T-cell (primary cell): ENCODE measurements at regions of chr12 and their contacts with region 1.

Region 1: DNA sequence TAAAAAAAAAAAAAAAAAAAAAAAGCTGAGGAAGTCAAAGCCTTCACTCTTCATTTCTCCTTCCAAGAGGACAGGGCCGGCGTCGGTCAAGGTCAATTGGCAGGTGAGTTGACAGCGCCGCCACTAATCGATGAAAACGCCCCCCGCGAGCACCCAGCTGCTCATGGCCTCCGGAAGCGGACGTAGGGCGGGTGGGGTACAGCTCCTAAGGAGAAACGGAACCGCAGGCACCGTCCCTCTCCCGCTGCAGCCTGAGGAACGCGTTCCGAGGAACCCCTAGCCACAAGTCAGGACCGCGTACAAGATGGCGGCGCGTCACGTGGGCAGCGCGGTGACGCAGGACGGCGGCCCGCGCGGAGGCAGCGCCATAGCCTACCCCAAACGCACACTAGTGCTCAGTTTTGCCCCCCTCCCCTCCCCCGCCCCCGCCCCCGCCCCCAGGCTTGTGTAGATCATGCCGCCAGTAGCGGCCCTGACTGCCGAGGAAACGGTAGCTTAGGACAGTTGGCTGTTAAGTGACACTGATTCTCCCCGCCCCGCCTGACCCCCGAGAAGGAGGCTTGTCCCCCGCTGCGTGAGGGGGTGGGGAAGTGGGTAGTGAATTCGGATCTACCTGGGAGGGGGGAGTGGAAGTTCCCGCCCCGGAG is at the start of gene ATF1:
- DNase-seq: peak; percentile 79 to 95 (median 88)
- ATAC-seq: peak; percentile 83 to 84 (median 84)
- H3K4me3 ChIP-seq: peak within 1 kb of the TSS; percentile 66 to 97
- H3K4me3 Mint-ChIP-seq: peak within 1 kb of the TSS; percentile 92 to 96 (median 93)
- H3K27ac ChIP-seq: peak within 1 kb of the TSS; percentile 92
- H3K27ac Mint-ChIP-seq: peak within 1 kb of the TSS; percentile 94
- H3K4me1 ChIP-seq: peaks cover 5 to 33% of the 10 kb centered on the region in 2 experiments
- H3K4me1 Mint-ChIP-seq: peaks cover 28 to 43% (median 42%) of the 10 kb centered on the region in 3 donors
- H3K27me3 ChIP-seq: no peaks in the 10 kb centered on the region
- H3K27me3 Mint-ChIP-seq: no peaks in the 10 kb centered on the region
- total RNA-seq, gene ATF1: 33.2 to 42.8 (median 35.5) TPM

Region 2: DNA sequence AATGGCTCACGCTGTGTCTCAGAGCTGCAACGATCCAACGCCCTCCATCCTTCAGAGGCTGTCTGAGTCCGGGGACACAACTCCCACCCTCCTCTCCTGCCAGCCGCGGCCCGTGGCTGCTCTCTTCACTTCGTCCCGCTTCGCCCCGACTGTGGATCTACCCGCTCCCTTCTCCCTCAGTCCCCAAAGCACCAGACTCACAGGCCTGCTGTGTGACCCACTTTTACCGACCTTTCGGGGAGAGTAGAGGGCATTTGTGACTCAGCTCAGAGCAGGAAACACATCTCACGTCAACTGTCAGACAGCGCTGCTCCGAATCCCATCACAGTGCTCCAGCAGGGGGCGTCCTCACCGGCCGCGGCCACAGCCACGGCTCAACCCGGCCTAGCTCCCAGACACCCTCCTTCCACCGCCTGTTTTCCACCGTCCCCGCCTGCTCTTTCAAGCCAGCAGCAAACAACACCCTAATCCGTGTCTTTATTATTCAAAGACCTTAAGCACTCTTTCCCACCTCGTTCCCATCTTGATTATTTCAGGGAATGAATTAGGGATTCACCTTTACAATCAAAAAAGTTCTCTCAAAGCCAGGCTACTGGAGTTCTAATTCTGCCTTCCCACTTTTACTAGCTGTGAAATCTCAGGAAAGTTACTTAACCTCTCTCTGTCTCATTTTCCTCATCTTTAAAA is 818.2 kb before region 1 on chr12:
- CTCF ChIA-PET with region 1: no interaction called
- POLR2A ChIA-PET with region 1: no interaction called
- DNase-seq: peak; percentile 33 to 89 (median 69)
- ATAC-seq: peak; percentile 90 to 98 (median 94)
- H3K4me3 ChIP-seq: peak overlapping the region; percentile 29 to 65
- H3K4me3 Mint-ChIP-seq: peak overlapping the region; percentile 70 to 83 (median 81)
- H3K27ac ChIP-seq: peak overlapping the region; percentile 30
- H3K27ac Mint-ChIP-seq: peak overlapping the region; percentile 84 to 97
- H3K4me1 ChIP-seq: peaks cover 0 to 21% of the 10 kb centered on the region in 2 experiments
- H3K4me1 Mint-ChIP-seq: peaks cover 17 to 47% (median 29%) of the 10 kb centered on the region in 3 donors
- H3K27me3 ChIP-seq: peaks cover 0 to 25% of the 10 kb centered on the region in 2 experiments
- H3K27me3 Mint-ChIP-seq: peaks cover 0 to 11% of the 10 kb centered on the region in 2 donors

Region 3: GRCh38 chr12:50775251-50775650 is 11.5 kb after region 1 on chr12:
- CTCF ChIA-PET with region 1: interaction called, 3 to 15 read pairs
- POLR2A ChIA-PET with region 1: interaction called in 1 of 2 experiments, 3 read pairs
- DNase-seq: no peak
- ATAC-seq: no peak
- H3K4me3 ChIP-seq: no peak overlapping the region
- H3K4me3 Mint-ChIP-seq: no peak overlapping the region
- H3K27ac ChIP-seq: no peak overlapping the region
- H3K27ac Mint-ChIP-seq: no peak overlapping the region
- H3K4me1 ChIP-seq: peaks cover 0 to 7% of the 10 kb centered on the region in 2 experiments
- H3K4me1 Mint-ChIP-seq: peaks cover 33 to 46% (median 40%) of the 10 kb centered on the region in 3 donors
- H3K27me3 ChIP-seq: no peaks in the 10 kb centered on the region
- H3K27me3 Mint-ChIP-seq: no peaks in the 10 kb centered on the region

Region 4: DNA sequence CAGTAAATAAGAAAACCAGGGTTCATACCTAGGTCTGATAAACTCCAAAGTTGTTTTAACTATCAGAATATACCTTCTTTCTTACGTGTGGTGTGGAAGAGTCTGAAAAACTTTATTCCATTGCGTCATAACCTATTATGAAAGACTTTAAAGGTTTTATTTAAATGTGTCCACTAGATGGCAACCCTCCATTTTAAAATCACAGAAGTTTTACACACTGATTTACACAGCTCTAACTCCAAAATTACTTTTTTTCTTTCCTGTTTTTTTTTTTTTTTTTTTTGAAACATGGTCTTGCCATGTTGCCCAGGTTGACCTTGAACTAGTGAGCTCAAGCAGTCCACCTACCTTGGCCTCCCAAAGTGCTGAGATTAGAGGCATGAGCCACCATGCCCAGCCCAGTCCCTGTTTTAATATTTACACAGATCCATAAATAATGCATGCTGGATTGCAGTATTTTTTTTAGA is 61.6 kb after region 1 on chr12:
- CTCF ChIA-PET with region 1: interaction called, 3 to 11 read pairs
- POLR2A ChIA-PET with region 1: interaction called in 1 of 2 experiments, 6 read pairs
- DNase-seq: peak in 1 of 35 experiments; percentile 77
- ATAC-seq: peak; percentile 59 to 93 (median 66)
- H3K4me3 ChIP-seq: no peak overlapping the region
- H3K4me3 Mint-ChIP-seq: no peak overlapping the region
- H3K27ac ChIP-seq: peak overlapping the region; percentile 65
- H3K27ac Mint-ChIP-seq: peak overlapping the region; percentile 39 to 80
- H3K4me1 ChIP-seq: peaks cover 2 to 3% of the 10 kb centered on the region in 2 experiments
- H3K4me1 Mint-ChIP-seq: peaks cover 6 to 10% (median 6%) of the 10 kb centered on the region in 3 donors
- H3K27me3 ChIP-seq: no peaks in the 10 kb centered on the region
- H3K27me3 Mint-ChIP-seq: no peaks in the 10 kb centered on the region

Region 5: GRCh38 chr12:50986966-50987737 is 223.4 kb after region 1 on chr12:
- CTCF ChIA-PET with region 1: interaction called, 3 to 15 read pairs
- POLR2A ChIA-PET with region 1: interaction called in 1 of 2 experiments, 3 read pairs
- DNase-seq: peak in 18 of 35 experiments; percentile 1 to 59 (median 12)
- ATAC-seq: peak; percentile 60 to 79 (median 72)
- H3K4me3 ChIP-seq: no peak overlapping the region
- H3K4me3 Mint-ChIP-seq: no peak overlapping the region
- H3K27ac ChIP-seq: no peak overlapping the region
- H3K27ac Mint-ChIP-seq: peak overlapping the region in 1 of 2 donors; percentile 78
- H3K4me1 ChIP-seq: no peaks in the 10 kb centered on the region
- H3K4me1 Mint-ChIP-seq: peaks cover 0 to 9% (median 9%) of the 10 kb centered on the region in 3 donors
- H3K27me3 ChIP-seq: no peaks in the 10 kb centered on the region
- H3K27me3 Mint-ChIP-seq: no peaks in the 10 kb centered on the region

Region 6: GRCh38 chr12:51025836-51026638 is 262.3 kb after region 1 on chr12 and contains the start of gene SLC11A2:
- CTCF ChIA-PET with region 1: interaction called in 1 of 2 experiments, 34 read pairs
- POLR2A ChIA-PET with region 1: no interaction called
- DNase-seq: peak; percentile 71 to 94 (median 84)
- ATAC-seq: peak; percentile 94 to 97 (median 96)
- H3K4me3 ChIP-seq: peak within 1 kb of the TSS; percentile 60 to 85
- H3K4me3 Mint-ChIP-seq: peak within 1 kb of the TSS; percentile 96 to 99 (median 98)
- H3K27ac ChIP-seq: peak within 1 kb of the TSS; percentile 77
- H3K27ac Mint-ChIP-seq: peak within 1 kb of the TSS; percentile 98
- H3K4me1 ChIP-seq: peaks cover 20 to 48% of the 10 kb centered on the region in 2 experiments
- H3K4me1 Mint-ChIP-seq: peaks cover 55 to 60% (median 59%) of the 10 kb centered on the region in 3 donors
- H3K27me3 ChIP-seq: peaks cover 0 to 7% of the 10 kb centered on the region in 2 experiments
- H3K27me3 Mint-ChIP-seq: no peaks in the 10 kb centered on the region
- total RNA-seq, gene SLC11A2: 46.5 to 62.2 (median 52.3) TPM

Region 7: DNA sequence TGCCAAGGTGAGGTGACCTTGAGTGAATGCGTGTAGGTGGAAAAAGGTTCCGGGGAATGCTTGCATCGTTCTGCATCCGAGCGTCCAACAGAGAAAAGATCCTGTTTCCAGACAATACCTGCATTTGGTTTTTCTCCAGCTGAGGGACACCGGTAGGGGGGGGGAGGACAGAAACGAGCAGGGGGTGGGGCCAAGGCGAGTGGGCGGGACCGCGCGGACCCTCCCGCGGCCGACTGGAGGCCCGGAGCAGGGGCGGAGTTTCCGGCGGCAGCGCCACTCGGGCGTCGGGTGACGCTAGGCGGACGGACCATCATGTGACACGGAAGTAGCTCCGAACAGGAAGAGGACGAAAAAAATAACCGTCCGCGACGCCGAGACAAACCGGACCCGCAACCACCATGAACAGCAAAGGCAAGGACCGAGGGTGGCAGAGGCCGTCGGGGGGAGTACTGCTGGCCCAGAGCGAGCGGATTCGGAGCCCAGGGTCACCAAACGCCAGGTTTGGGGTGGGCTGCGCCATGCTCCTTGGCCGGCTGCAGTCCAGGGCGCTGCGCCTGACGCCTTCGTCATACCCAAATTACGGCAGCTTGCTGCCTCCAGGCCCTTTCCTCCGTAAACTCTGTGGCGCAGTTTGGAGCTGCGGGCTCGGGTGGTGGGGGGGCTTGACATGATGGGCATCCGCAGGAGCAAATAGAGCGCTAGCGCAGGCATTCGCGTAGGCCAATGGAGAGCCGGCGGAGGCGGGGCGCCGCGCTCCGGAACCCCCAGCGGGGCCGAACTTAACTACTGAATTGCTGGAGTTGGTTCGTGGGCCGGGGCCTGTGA is 475.0 kb after region 1 on chr12 and contains the start of gene DAZAP2:
- CTCF ChIA-PET with region 1: interaction called in 1 of 2 experiments, 4 read pairs
- POLR2A ChIA-PET with region 1: interaction called in 1 of 2 experiments, 10 read pairs
- DNase-seq: peak; percentile 86 to 98 (median 92)
- ATAC-seq: peak; percentile 89 to 94 (median 92)
- H3K4me3 ChIP-seq: peak within 1 kb of the TSS; percentile 98 to 99
- H3K4me3 Mint-ChIP-seq: peak within 1 kb of the TSS; percentile 96 to 97 (median 96)
- H3K27ac ChIP-seq: peak within 1 kb of the TSS; percentile 100
- H3K27ac Mint-ChIP-seq: peak within 1 kb of the TSS; percentile 99 to 100
- H3K4me1 ChIP-seq: peaks cover 13 to 41% of the 10 kb centered on the region in 2 experiments
- H3K4me1 Mint-ChIP-seq: peaks cover 42 to 46% (median 44%) of the 10 kb centered on the region in 3 donors
- H3K27me3 ChIP-seq: no peaks in the 10 kb centered on the region
- H3K27me3 Mint-ChIP-seq: no peaks in the 10 kb centered on the region
- total RNA-seq, gene DAZAP2: 275 to 308 (median 282) TPM